CD14-positive monocyte (primary cell): ENCODE measurements at regions of chr10 and their contacts with region 1.

Region 1: GRCh38 chr10:17787078-17787961 is 21.8 kb upstream of the MRC1 start:
- DNase-seq: no peak
- H3K4me3 ChIP-seq: no peak overlapping the region
- H3K4me3 Mint-ChIP-seq: no peak overlapping the region
- H3K27ac ChIP-seq: no peak overlapping the region
- H3K27ac Mint-ChIP-seq: peak overlapping the region in 1 of 7 donors; percentile 77
- H3K4me1 ChIP-seq: peaks cover 42 to 47% of the 10 kb centered on the region in 2 donors
- H3K4me1 Mint-ChIP-seq: peaks cover 54% of the 10 kb centered on the region
- H3K27me3 ChIP-seq: no peaks in the 10 kb centered on the region
- H3K27me3 Mint-ChIP-seq: peaks cover 1 to 7% (median 2%) of the 10 kb centered on the region in 3 donors
- CTCF ChIP-seq: no peak

Region 2: DNA sequence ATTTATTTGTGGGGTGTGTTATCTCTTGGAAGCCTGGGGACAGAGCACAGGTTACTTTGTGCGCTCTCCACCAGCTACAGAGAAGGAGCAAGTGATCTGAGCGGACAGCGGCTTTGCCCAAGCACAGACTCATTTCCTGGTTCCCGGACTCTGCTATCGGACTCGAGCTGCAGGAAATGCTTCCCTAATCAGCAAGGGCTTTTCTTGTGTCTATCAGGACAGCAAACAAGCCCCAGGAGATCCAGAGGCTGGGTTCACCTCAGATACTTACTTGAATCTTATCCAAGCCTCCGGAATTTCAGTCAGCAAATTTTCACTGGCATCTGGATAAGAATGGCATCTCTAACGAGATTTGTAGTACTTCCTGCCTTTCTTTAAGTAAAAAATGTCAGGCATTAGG is 49.6 kb after region 1 on chr10:
- intact Hi-C with region 1: loop called in 1 of 2 experiments (anchors 10 kb)
- DNase-seq: peak in 2 of 3 donors; percentile 49 to 53
- H3K4me3 ChIP-seq: peak overlapping the region; percentile 36 to 72 (median 48)
- H3K4me3 Mint-ChIP-seq: peak overlapping the region; percentile 56 to 91
- H3K27ac ChIP-seq: peak overlapping the region in 1 of 2 donors; percentile 52
- H3K27ac Mint-ChIP-seq: peak overlapping the region in 5 of 7 donors; percentile 58 to 79 (median 73)
- H3K4me1 ChIP-seq: peaks cover 44 to 63% of the 10 kb centered on the region in 2 donors
- H3K4me1 Mint-ChIP-seq: peaks cover 56% of the 10 kb centered on the region
- H3K27me3 ChIP-seq: peaks cover 0 to 3% of the 10 kb centered on the region in 2 donors
- H3K27me3 Mint-ChIP-seq: peaks cover 0 to 6% (median 3%) of the 10 kb centered on the region in 3 donors
- CTCF ChIP-seq: no peak